GM12878 (cell line): ENCODE measurements at regions of chr17 and their contacts with region 1.

Region 1: GRCh38 chr17:42997984-42998938 is at the start of gene RPL27:
- DNase-seq: peak; percentile 100
- ATAC-seq: peak; percentile 97
- H3K4me3 ChIP-seq: peak within 1 kb of the TSS; percentile 95
- H3K27ac ChIP-seq: peak within 1 kb of the TSS; percentile 82
- H3K4me1 ChIP-seq: peaks cover 3% of the 10 kb centered on the region; the same call in 1 of the 2 replicates
- H3K27me3 ChIP-seq: no peaks in the 10 kb centered on the region
- CTCF ChIP-seq: peak; percentile 83 to 89 (median 88)
- EP300 ChIP-seq: peak in 1 of 2 experiments; percentile 73; a peak in 2 of 4 replicates
- POLR2A ChIP-seq: peak; percentile 95
- RAD21 ChIP-seq: peak; percentile 60
- polyA plus RNA-seq, gene RPL27: 4,376 to 4,686 TPM

Region 2: DNA sequence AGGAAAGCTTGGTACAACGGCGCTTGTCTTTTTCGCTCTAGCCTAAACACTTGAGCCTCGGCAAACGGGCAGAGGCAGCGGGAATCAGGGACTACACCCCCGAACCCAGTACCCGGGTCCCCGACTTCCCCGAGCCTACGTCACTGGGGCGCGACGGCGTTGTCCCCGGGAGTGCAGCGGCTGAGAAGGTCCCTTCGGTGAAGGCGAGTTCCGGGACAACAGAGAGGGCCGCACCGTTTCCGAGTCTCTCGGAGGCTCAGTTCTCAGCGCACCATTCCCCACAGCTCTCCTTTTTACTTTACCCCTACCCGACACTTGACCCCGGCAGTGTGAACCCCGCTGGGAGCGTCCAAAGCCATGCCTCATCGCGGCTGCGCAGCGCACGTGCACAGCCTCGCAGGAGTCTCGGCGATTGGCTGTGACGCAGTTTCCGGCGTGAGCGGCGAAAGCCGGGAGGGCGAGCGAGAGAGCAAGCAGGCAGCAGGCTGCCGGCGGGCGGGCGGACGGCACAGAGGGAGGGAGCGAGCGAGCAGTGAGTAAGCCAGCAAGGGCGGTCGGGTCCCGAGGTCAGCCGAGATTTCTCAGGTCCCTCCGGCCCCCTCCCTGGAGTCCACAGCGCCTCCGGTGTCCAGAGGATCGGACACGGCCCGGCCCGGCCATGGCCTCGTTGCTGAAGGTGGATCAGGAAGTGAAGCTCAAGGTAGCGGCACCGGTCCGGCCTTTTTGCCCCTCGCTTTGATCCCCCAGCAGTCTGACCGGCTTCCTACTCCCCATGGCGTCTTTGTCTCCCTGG is 165.1 kb before region 1 on chr17 and contains the start of gene PSME3:
- CTCF ChIA-PET with region 1: interaction called, 8 read pairs
- POLR2A ChIA-PET with region 1: interaction called, 9 read pairs
- RAD21 ChIA-PET with region 1: interaction called, 5 read pairs
- SMC1A ChIA-PET with region 1: interaction called, 10 read pairs
- in situ Hi-C with region 1: no loop called
- intact Hi-C with region 1: no loop called
- DNase-seq: peak; percentile 59
- ATAC-seq: peak; percentile 95
- H3K4me3 ChIP-seq: peak within 1 kb of the TSS; percentile 93
- H3K27ac ChIP-seq: peak within 1 kb of the TSS; percentile 92
- H3K4me1 ChIP-seq: peaks cover 5% of the 10 kb centered on the region; the same call in 1 of the 2 replicates
- H3K27me3 ChIP-seq: no peaks in the 10 kb centered on the region
- CTCF ChIP-seq: no peak
- EP300 ChIP-seq: no peak
- POLR2A ChIP-seq: peak; percentile 97
- RAD21 ChIP-seq: no peak
- polyA plus RNA-seq, gene PSME3: 26.9 to 33.8 TPM

Region 3: GRCh38 chr17:42928714-42929496 is 69.4 kb before region 1 on chr17:
- CTCF ChIA-PET with region 1: interaction called, 6 read pairs
- POLR2A ChIA-PET with region 1: interaction called, 3 read pairs
- RAD21 ChIA-PET with region 1: interaction called, 12 read pairs
- SMC1A ChIA-PET with region 1: interaction called, 7 read pairs
- in situ Hi-C with region 1: no loop called
- intact Hi-C with region 1: no loop called
- DNase-seq: peak; percentile 45
- ATAC-seq: peak; percentile 94
- H3K4me3 ChIP-seq: no peak overlapping the region
- H3K27ac ChIP-seq: peak overlapping the region; percentile 77
- H3K4me1 ChIP-seq: peaks cover 9% of the 10 kb centered on the region
- H3K27me3 ChIP-seq: no peaks in the 10 kb centered on the region
- CTCF ChIP-seq: peak; percentile 47 to 65 (median 59); a peak in 5 of 6 replicates
- EP300 ChIP-seq: no peak
- POLR2A ChIP-seq: no peak
- RAD21 ChIP-seq: peak; percentile 68

Region 4: DNA sequence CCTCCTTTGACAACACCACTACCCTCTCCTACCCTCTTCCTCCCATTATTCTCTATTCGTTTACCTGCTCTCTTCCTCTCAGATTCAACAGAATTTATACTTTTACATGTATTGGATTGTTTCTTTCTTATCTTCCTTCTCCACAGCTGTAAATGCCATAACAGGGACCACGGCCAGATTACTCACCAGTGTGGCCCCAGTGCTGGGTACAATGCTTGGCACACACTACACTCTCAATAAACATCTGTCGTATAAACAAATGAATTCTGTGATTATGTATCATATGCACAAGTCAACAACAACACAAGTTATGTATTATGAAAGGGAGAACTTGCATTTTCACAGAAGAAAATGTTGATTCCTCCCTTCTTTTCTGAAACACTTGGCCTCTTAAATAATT is 54.0 kb before region 1 on chr17:
- CTCF ChIA-PET with region 1: interaction called, 13 read pairs
- POLR2A ChIA-PET with region 1: no interaction called
- RAD21 ChIA-PET with region 1: interaction called, 4 read pairs
- SMC1A ChIA-PET with region 1: interaction called, 9 read pairs
- in situ Hi-C with region 1: no loop called
- intact Hi-C with region 1: no loop called
- DNase-seq: no peak
- ATAC-seq: no peak
- H3K4me3 ChIP-seq: no peak overlapping the region
- H3K27ac ChIP-seq: no peak overlapping the region
- H3K4me1 ChIP-seq: no peaks in the 10 kb centered on the region
- H3K27me3 ChIP-seq: no peaks in the 10 kb centered on the region
- CTCF ChIP-seq: no peak
- EP300 ChIP-seq: no peak
- POLR2A ChIP-seq: no peak
- RAD21 ChIP-seq: no peak

Region 5: DNA sequence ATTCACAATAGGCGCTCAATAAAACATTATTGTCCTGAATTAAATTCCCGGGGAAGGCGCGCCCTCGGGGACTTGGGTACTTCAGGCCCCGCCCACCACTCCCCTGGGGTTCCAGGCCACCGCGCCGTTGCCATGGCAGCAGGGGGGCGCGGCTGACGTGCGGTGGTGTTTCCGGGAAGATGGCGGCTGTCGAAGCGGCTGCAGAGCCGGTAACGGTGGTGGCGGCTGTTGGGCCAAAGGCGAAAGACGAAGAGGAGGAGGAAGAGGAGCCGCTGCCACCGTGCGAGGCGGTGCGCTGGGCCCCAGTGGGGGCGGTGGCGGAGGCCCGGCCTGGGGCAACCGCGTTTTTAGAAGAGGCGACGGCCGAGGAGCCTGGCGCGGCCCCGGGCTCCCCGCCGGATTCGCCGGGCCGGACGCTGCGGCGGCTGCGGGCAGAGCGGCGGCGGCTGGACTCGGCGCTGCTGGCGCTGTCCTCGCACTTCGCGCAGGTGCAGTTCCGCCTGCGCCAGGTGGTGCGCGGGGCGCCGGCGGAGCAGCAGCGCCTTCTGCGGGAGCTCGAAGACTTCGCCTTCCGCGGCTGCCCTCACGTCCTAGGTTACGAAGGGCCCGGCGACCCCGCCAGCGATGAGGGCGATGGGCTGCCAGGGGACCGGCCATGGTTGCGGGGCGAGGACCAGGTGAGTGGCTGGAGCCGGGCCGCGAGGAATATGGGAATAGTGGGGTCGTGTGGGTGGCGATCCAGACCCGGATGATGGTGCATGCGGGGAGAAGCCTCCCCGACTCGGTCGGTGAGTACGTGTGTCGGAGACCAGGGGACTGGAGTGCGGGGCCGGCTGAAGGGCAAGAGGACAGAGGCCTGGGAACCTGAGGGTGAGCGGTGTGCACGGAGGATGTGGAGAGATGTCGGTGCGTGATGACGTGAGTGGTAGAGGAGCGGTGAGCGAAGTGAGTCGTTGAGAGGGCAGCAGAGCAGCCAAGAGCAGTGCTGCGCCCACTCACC is 17.6 kb before region 1 on chr17 and contains the start of gene RUNDC1:
- CTCF ChIA-PET with region 1: interaction called, 66 read pairs
- POLR2A ChIA-PET with region 1: interaction called, 21 read pairs
- RAD21 ChIA-PET with region 1: interaction called, 31 read pairs
- SMC1A ChIA-PET with region 1: interaction called, 47 read pairs
- in situ Hi-C with region 1: no loop called
- intact Hi-C with region 1: loop called (anchors 1 kb)
- DNase-seq: peak; percentile 51
- ATAC-seq: peak; percentile 84
- H3K4me3 ChIP-seq: peak within 1 kb of the TSS; percentile 94
- H3K27ac ChIP-seq: peak within 1 kb of the TSS; percentile 85
- H3K4me1 ChIP-seq: peaks cover 14% of the 10 kb centered on the region
- H3K27me3 ChIP-seq: no peaks in the 10 kb centered on the region
- CTCF ChIP-seq: peak in 2 of 3 experiments; percentile 21 to 38; a peak in 2 of 6 replicates
- EP300 ChIP-seq: no peak
- POLR2A ChIP-seq: peak; percentile 78
- RAD21 ChIP-seq: no peak
- polyA plus RNA-seq, gene RUNDC1: 2.9 to 3.0 TPM

Region 6: DNA sequence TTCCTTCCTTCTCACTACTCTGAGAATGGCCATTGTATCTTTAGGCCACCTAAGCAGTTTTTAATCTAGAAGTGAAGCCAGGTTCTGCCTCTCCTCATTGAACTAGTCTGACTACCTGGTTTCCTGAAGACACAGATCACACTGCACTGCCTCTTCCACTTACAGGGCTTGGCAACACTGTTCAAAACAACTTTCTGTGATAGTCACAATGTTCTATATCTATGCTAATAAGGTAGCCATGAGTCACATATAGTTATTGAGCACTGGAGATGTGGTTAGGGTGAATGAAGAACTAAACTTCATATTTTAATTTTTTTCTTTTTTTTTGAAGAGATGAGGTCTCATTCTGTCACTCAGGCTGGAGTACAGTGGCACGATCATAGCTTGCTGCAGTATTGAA is 53.7 kb after region 1 on chr17:
- CTCF ChIA-PET with region 1: no interaction called
- POLR2A ChIA-PET with region 1: no interaction called
- RAD21 ChIA-PET with region 1: no interaction called
- SMC1A ChIA-PET with region 1: no interaction called
- in situ Hi-C with region 1: no loop called
- intact Hi-C with region 1: no loop called
- DNase-seq: no peak
- ATAC-seq: no peak
- H3K4me3 ChIP-seq: no peak overlapping the region
- H3K27ac ChIP-seq: no peak overlapping the region
- H3K4me1 ChIP-seq: no peaks in the 10 kb centered on the region
- H3K27me3 ChIP-seq: no peaks in the 10 kb centered on the region
- CTCF ChIP-seq: no peak
- EP300 ChIP-seq: no peak
- POLR2A ChIP-seq: no peak
- RAD21 ChIP-seq: no peak